PC-3 (cell line): ENCODE measurements at regions of chr3 and their contacts with region 1.

Region 1: GRCh38 chr3:13884851-13885703 is 5.2 kb upstream of the WNT7A start:
- DNase-seq: peak; percentile 86
- ATAC-seq: peak; percentile 81
- H3K4me3 ChIP-seq: no peak overlapping the region
- H3K27ac ChIP-seq: no peak overlapping the region
- H3K4me1 ChIP-seq: no peaks in the 10 kb centered on the region
- H3K27me3 ChIP-seq: no peaks in the 10 kb centered on the region
- CTCF ChIP-seq: peak; percentile 96

Region 2: DNA sequence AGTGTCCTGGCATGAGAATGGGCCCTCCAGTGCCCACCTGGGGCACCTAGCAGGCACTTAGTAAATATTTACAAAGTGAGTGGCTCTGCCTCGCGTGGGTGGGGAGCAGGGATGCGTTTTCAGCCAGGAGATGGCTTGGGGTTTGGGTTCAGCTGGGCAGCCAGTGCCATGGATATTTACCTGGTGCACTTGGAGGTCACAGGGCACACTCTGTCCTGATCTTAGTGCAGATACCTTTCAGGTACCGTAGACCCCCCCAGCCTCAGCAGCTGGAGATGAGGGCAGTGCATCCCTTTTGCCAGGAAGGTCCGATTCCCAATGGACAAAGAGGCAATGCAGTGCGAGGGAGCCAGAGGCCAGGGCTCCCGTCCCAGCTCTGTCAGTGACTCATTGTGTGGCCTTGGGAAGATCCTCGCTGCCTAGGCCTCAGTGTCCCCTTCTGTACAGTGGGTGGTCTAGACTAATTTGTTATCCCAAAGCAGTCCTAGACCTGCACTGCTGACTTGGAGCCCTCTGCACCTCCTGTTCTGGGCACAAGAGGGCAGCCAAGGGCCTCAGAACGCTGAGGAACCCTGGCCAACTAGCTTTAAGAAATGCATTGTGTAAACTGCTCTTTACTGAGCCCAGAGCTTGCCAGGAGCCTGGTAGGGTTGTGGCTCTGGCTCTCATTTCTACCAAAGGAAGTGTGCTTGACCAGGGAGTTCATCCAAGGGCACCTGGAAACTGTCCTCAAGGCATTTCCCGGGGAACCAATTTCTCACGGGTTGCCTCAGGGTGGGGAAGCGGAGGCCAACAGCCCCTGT is 389.0 kb before region 1 on chr3:
- CTCF ChIA-PET with region 1: no interaction called
- POLR2A ChIA-PET with region 1: no interaction called
- intact Hi-C with region 1: loop called (anchors 2 kb)
- DNase-seq: peak; percentile 92
- ATAC-seq: peak; percentile 91
- H3K4me3 ChIP-seq: no peak overlapping the region
- H3K27ac ChIP-seq: peak overlapping the region; percentile 25; the same call in 1 of the 2 replicates
- H3K4me1 ChIP-seq: peaks cover 11% of the 10 kb centered on the region
- H3K27me3 ChIP-seq: no peaks in the 10 kb centered on the region
- CTCF ChIP-seq: peak; percentile 96

Region 3: DNA sequence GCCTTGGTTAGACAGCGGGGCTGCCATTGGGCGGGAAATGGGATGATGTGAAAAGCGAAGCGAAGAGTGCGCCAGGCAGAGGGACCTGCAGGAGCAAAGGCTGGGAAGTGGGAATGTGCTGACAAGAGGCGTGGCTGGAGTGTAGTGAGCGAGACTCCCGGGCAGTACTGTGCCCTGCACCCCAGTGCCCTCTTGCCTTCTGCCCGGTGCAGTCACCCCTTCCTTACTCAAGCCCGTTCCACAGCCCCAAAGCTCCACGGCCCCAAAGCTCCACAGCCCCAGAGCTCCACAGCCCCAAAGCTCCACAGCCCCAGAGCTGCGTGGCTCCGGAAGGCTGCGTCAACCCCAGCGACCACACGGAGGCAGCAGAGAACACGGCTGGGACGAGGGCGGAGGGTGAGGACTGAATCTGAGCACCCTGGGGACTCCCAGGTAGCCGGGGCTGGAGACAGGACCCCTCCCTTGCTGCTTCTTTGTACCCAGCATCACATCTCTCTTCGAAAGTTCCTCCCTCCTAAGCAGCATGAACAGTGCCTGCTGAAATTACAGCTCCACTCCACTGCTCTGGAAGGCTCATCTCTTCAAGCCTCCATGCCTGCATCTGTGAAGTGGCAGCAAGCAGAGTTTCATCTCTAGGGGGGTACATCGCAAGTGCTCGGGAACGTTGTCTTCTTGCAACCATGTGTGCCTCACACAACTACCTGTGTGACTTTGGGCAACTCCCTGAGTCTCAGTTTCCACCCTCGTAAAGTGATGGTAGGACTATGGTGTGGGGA is 227.2 kb before region 1 on chr3:
- CTCF ChIA-PET with region 1: interaction called, 69 read pairs
- POLR2A ChIA-PET with region 1: no interaction called
- intact Hi-C with region 1: loop called (anchors 1 kb)
- DNase-seq: peak; percentile 81
- ATAC-seq: peak; percentile 81
- H3K4me3 ChIP-seq: no peak overlapping the region
- H3K27ac ChIP-seq: no peak overlapping the region
- H3K4me1 ChIP-seq: peaks cover 5% of the 10 kb centered on the region; the same call in 1 of the 2 replicates
- H3K27me3 ChIP-seq: no peaks in the 10 kb centered on the region
- CTCF ChIP-seq: peak; percentile 94